Heart left ventricle (tissue), 16 donors: ENCODE measurements at regions of chr5 and their contacts with region 1.

Region 1: DNA sequence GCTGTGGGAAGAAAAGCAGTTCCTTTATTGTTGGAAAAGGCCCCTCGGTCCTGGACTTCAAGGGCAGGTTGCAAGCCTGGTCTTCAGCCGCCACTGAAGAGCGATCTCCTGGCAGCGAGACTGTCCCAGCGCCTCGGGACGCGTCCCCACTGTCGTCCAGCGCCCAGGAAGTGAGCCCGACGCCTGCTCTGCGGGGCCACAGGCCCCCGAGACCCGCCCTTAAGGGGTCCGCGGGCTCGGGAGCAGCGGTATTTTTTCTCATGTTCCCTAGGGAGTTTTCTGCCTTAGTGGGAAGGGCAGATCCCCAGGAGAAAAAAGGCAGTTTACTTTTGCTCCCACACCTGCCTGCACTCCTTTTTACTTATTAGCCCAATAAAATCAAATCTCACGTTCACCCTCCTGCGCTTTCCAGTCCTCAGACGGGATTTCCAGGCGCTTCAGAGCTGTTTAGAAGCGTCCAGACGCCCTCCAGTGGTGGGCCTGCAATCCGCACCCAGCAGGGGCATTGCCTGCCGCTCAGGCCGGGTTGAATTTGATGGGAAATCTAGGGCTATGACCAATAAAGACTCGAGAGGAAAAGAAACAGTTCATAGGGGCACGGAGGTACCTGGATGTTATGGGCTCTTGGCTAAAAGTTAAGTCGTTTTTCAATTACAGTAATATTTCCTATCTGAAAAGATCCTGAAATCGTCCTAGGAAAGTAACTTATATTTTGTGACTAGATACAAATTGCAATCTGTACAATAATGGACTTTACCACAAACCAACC is 2.8 kb upstream of the EFNA5 start:
- DNase-seq: peak; percentile 79 to 89 (median 85)
- ATAC-seq: peak; percentile 49 to 62 (median 56)
- H3K4me3 ChIP-seq: peak overlapping the region; percentile 48 to 79 (median 64)
- H3K27ac ChIP-seq: peak overlapping the region; percentile 24 to 93 (median 87)
- H3K4me1 ChIP-seq: peaks cover 0 to 41% (median 10%) of the 10 kb centered on the region in 12 donors
- H3K27me3 ChIP-seq: peaks cover 0 to 77% (median 19%) of the 10 kb centered on the region in 9 donors
- CTCF ChIP-seq: peak; percentile 77 to 98 (median 92)
- POLR2A ChIP-seq: no peak

Region 2: GRCh38 chr5:107058239-107058638 is 615.3 kb before region 1 on chr5:
- intact Hi-C with region 1: loop called in 3 of 10 experiments (anchors 10 kb)
- DNase-seq: peak in 2 of 5 donors; percentile 18 to 26
- ATAC-seq: peak; percentile 53 to 87 (median 82)
- H3K4me3 ChIP-seq: no peak overlapping the region
- H3K27ac ChIP-seq: peak overlapping the region in 3 of 12 donors; percentile 8 to 21 (median 14)
- H3K4me1 ChIP-seq: peaks cover 0 to 7% (median 0%) of the 10 kb centered on the region in 12 donors
- H3K27me3 ChIP-seq: no peaks in the 10 kb centered on the region
- CTCF ChIP-seq: no peak
- POLR2A ChIP-seq: no peak

Region 3: DNA sequence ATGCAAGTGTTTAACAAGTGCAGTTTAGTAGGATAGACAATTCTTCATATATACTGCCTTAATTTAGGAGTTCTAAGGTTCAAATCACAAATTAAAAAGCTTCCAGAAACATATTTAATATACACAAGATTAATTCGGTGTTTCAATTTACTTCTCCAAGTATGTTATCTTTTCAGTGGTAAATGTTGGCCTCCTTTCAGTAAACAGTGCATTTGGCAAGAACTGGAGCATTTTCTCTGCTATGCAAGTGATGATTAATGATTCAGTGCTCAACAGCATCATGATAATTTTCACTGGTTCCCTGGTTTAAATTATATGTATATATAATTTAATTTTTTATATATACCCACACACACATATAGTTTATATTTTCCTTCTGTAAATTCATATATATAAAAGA is 544.5 kb before region 1 on chr5:
- intact Hi-C with region 1: loop called in 1 of 10 experiments (anchors 10 kb)
- DNase-seq: no peak
- ATAC-seq: no peak
- H3K4me3 ChIP-seq: no peak overlapping the region
- H3K27ac ChIP-seq: no peak overlapping the region
- H3K4me1 ChIP-seq: peaks cover 0 to 8% (median 0%) of the 10 kb centered on the region in 12 donors
- H3K27me3 ChIP-seq: no peaks in the 10 kb centered on the region
- CTCF ChIP-seq: no peak
- POLR2A ChIP-seq: no peak

Region 4: DNA sequence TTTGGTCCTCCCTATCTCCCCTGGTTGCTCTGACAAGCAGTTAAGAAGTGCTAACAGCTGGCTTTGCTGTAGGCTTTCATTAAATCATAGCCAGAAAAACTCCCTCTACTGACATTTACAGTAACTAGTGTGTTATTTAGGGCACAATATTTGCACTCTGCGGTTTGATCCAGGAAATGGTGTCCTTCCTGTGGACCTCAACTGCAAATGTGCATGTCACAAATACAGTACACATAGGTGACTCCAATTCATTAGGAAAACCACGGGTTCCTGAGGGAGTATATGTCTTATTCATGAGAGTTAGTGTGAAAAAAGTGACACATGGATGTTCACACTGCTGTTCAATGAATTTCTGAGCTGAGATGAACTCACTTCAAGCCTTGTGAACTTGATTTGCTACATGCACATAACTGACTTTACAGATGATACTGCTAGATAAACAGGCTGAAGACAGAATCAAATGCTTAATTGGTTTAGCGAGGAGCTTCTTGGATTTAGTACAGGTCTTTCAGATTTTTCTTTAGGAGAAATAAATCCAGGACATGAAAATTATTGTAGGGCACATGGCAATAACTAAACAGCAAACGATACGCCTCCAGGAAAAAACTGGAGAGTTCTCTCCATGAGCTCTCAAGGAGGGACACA is 284.3 kb before region 1 on chr5:
- intact Hi-C with region 1: loop called in 2 of 10 experiments (anchors 5 kb)
- DNase-seq: no peak
- ATAC-seq: peak; percentile 70 to 81 (median 76)
- H3K4me3 ChIP-seq: no peak overlapping the region
- H3K27ac ChIP-seq: peak overlapping the region; percentile 1 to 74 (median 60)
- H3K4me1 ChIP-seq: peaks cover 0 to 34% (median 17%) of the 10 kb centered on the region in 12 donors
- H3K27me3 ChIP-seq: no peaks in the 10 kb centered on the region
- CTCF ChIP-seq: peak in 3 of 12 donors; percentile 13 to 35 (median 25)
- POLR2A ChIP-seq: no peak

Region 5: GRCh38 chr5:107571621-107572536 is 101.7 kb before region 1 on chr5:
- intact Hi-C with region 1: loop called in 7 of 10 experiments (anchors 5 kb)
- DNase-seq: peak; percentile 88 to 93 (median 90)
- ATAC-seq: peak; percentile 90 to 95 (median 94)
- H3K4me3 ChIP-seq: peak overlapping the region in 11 of 12 donors; percentile 9 to 60 (median 47)
- H3K27ac ChIP-seq: peak overlapping the region in 11 of 12 donors; percentile 47 to 89 (median 81)
- H3K4me1 ChIP-seq: peaks cover 0 to 50% (median 14%) of the 10 kb centered on the region in 12 donors
- H3K27me3 ChIP-seq: peaks cover 0 to 5% (median 0%) of the 10 kb centered on the region in 9 donors
- CTCF ChIP-seq: peak; percentile 87 to 96 (median 94)
- POLR2A ChIP-seq: peak in 1 of 2 donors; percentile 19